Activated CD4-positive, alpha-beta T cell treated with anti-CD3 and anti-CD28 coated beads, Interleukin-2, amount 10 ng/mL, durations not matched to agents 24 days and 14 days (primary cell): ENCODE measurements at regions of chr6 and their contacts with region 1.

Region 1: DNA sequence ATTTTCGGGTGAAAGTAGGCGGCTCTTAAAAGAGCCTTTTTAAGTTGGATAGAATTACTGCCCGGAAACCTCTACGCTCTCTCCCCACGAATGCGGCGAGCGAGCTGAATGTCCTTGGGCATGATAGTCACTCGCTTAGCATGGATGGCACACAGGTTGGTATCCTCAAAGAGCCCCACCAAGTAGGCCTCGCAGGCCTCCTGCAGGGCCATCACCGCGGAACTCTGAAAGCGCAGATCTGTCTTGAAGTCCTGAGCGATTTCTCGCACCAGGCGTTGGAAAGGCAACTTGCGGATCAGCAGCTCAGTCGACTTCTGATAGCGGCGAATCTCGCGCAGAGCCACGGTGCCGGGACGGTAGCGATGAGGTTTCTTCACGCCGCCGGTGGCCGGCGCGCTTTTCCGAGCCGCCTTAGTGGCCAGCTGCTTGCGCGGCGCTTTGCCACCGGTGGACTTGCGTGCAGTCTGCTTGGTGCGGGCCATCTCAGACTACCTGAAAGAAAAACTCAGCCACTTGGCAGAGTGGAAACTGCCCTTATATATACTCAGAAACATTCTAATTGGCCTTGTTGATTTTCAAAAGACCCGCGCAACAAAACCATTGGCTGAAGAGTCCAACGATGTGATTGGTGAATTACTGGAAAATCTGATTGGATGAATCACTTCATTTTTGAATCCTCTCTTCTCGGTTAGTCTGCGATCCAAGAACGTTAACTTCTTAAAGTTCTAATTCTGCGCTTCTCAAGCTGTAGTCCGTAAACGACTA is 93.9 kb upstream of the BTN3A2 start:
- DNase-seq: peak; percentile 95
- H3K4me3 Mint-ChIP-seq: no peak overlapping the region
- H3K27ac Mint-ChIP-seq: no peak overlapping the region
- H3K4me1 Mint-ChIP-seq: peaks cover 28% of the 10 kb centered on the region
- H3K27me3 Mint-ChIP-seq: no peaks in the 10 kb centered on the region

Region 2: GRCh38 chr6:26156076-26156849 is 114.8 kb before region 1 on chr6:
- intact Hi-C with region 1: loop called (anchors 5 kb)
- DNase-seq: peak; percentile 97
- H3K4me3 Mint-ChIP-seq: peak overlapping the region; percentile 90
- H3K27ac Mint-ChIP-seq: peak overlapping the region; percentile 93
- H3K4me1 Mint-ChIP-seq: peaks cover 53% of the 10 kb centered on the region
- H3K27me3 Mint-ChIP-seq: peaks cover 11% of the 10 kb centered on the region

Region 3: DNA sequence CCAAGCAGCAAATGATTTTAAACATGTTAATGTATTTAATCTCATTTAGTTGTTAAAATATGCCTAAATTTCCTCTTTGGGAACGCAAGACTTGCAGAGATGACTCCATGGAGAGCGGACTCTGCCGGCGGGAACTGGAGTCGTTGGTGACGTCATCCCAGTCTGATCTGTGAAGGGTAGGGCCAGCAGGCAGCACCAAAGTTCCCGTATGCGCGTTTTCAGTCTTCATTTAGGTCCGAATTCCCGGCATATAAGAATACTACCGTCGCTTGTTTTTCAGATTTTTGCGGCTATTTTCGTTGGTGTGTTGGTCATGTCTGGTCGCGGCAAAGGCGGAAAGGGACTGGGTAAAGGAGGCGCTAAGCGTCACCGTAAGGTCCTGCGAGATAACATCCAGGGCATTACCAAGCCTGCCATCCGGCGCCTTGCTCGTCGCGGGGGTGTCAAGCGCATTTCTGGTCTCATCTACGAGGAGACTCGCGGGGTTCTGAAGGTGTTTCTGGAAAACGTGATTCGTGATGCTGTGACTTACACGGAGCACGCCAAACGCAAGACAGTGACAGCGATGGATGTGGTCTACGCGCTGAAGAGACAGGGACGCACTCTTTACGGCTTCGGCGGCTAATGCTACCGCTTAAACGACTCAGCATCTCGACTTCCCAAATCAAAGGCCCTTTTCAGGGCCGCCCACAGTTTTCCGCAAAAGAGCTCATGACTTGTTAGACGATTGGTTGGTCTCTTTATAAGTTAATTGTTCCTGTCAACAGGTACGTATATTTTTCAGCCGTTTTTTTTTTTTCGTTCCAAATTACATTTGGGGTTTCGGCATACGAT is 66.5 kb before region 1 on chr6:
- intact Hi-C with region 1: loop called (anchors 2 kb)
- DNase-seq: peak; percentile 96
- H3K4me3 Mint-ChIP-seq: no peak overlapping the region
- H3K27ac Mint-ChIP-seq: no peak overlapping the region
- H3K4me1 Mint-ChIP-seq: peaks cover 31% of the 10 kb centered on the region
- H3K27me3 Mint-ChIP-seq: peaks cover 4% of the 10 kb centered on the region

Region 4: DNA sequence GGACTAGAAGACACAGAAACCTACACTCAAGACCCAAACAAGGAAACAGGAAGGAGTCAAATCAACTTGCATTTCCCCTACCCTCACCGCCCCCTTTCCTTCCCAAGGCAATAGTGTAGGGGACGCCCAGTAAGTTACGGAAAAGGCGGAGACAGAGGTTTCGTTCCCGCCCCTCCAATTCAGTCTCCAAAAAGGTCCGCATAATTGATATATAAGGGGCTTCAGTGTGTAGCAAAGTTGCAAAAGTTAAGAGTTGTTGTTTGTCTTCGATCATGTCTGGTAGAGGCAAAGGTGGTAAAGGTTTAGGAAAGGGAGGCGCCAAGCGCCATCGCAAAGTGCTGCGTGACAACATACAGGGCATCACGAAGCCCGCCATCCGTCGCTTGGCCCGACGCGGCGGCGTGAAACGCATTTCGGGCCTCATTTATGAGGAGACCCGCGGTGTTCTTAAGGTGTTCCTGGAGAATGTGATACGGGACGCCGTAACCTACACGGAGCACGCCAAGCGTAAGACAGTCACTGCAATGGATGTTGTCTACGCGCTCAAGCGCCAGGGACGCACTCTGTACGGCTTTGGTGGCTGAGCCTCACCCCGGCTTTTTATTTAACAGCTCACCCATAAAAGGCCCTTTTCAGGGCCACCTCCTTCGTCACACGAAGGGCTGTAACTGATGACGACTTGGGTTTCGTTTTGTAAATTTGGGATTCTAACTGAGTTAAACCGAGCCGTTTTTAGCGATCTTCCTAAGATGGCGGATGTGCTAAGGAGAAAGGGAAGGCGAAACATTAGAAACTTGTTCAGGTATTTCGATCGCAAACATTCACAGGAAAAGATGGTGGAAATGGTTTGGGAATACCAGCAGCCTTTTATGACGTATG is 30.7 kb before region 1 on chr6:
- intact Hi-C with region 1: loop called (anchors 2 kb)
- DNase-seq: peak; percentile 95
- H3K4me3 Mint-ChIP-seq: peak overlapping the region; percentile 81
- H3K27ac Mint-ChIP-seq: peak overlapping the region; percentile 94
- H3K4me1 Mint-ChIP-seq: peaks cover 41% of the 10 kb centered on the region
- H3K27me3 Mint-ChIP-seq: no peaks in the 10 kb centered on the region

Region 5: DNA sequence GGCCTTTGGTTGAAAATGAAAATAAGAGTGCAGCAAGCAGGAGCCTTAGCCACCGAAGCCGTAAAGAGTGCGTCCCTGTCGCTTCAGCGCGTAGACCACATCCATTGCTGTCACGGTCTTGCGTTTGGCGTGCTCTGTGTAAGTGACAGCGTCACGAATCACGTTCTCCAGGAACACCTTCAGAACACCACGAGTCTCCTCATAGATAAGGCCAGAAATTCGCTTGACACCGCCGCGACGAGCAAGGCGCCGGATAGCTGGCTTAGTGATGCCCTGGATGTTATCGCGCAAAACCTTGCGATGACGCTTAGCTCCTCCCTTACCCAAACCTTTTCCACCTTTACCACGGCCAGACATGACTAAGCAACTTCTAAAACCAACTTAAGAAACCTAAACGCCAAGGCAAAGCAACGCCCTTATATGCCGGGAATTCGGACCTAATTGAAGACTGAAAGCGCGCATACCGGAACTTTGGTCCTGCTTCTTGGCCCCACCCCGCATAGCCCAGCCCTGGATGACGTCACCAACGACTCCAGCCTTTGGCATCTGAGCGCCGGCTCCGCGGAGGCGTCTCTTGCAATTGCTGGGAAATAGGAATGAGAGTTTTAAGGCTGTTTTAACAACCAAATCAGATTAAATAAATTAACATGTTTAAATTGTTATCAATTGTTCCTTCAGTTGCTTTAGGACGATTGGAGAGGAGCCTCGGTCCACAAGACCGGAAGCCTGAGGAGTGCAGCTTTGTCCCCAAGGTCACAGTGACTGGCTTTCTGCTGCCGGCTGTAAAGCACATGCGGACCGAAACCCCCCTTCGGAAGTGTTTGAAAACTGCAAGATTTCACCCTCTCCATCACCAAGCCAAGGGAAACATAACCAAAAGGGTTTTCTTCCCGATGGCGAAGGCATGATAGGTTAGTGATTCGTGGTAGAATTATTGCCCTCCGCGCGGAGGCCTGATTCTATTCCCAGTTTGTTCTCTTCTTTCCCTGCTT is 14.4 kb after region 1 on chr6:
- intact Hi-C with region 1: loop called (anchors 1 kb)
- DNase-seq: peak; percentile 99
- H3K4me3 Mint-ChIP-seq: peak overlapping the region; percentile 87
- H3K27ac Mint-ChIP-seq: peak overlapping the region; percentile 96
- H3K4me1 Mint-ChIP-seq: peaks cover 45% of the 10 kb centered on the region
- H3K27me3 Mint-ChIP-seq: peaks cover 7% of the 10 kb centered on the region

Region 6: DNA sequence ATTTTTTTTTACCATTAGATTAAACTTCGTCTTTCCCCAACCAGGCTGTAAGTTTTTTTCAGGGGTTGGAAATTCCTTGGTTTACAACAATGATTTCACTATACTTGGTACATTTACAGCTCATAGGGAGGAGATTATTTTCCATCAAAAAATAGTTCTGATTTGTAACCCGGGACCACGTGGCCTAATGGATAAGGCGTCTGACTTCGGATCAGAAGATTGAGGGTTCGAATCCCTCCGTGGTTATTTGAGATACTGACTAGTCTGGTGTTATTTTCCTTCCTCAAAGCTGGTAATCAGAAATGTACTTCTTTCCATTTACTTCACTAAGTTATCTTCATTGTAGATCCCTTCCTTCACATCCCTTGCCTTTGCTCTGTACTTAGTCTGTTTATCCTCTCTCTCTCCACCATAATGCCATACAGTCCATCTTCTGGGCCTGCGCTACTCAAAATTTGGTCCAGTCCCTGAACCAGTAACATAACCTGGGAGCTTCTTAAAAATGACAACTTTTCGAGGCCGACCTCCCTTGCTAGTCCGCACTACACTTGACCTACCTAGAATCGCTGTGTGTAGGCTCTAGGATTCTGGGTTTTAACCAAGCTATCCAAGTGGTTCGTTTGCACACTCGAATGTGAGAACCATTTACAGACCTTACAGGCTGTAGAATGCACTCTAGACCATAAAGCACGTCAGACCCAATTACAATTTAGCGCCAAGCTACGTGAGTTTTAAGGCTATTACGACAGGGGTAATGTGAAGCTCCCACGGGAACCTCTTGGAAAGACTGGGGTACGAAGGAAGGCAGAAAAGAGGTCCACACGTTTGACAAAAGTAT is 51.8 kb after region 1 on chr6:
- intact Hi-C with region 1: loop called (anchors 1 kb)
- DNase-seq: peak; percentile 92
- H3K4me3 Mint-ChIP-seq: peak overlapping the region; percentile 89
- H3K27ac Mint-ChIP-seq: peak overlapping the region; percentile 93
- H3K4me1 Mint-ChIP-seq: peaks cover 37% of the 10 kb centered on the region
- H3K27me3 Mint-ChIP-seq: peaks cover 6% of the 10 kb centered on the region

Region 7: GRCh38 chr6:27132532-27133280 is 861.6 kb after region 1 on chr6:
- intact Hi-C with region 1: loop called (anchors 5 kb)
- DNase-seq: peak; percentile 98
- H3K4me3 Mint-ChIP-seq: no peak overlapping the region
- H3K27ac Mint-ChIP-seq: no peak overlapping the region
- H3K4me1 Mint-ChIP-seq: peaks cover 37% of the 10 kb centered on the region
- H3K27me3 Mint-ChIP-seq: no peaks in the 10 kb centered on the region